ENCODE measurements at regions of chrX and their contacts with region 1.

Region 1: GRCh38 chrX:114075073-114075673 is 508.7 kb upstream of the HTR2C start:
- DNase-seq: no peak
- H3K4me3 Mint-ChIP-seq: no peak overlapping the region
- H3K27ac Mint-ChIP-seq: no peak overlapping the region
- H3K4me1 Mint-ChIP-seq: no peaks in the 10 kb centered on the region
- H3K27me3 Mint-ChIP-seq: peaks cover 64% of the 10 kb centered on the region
- CTCF ChIP-seq: peak; percentile 29

Region 2: DNA sequence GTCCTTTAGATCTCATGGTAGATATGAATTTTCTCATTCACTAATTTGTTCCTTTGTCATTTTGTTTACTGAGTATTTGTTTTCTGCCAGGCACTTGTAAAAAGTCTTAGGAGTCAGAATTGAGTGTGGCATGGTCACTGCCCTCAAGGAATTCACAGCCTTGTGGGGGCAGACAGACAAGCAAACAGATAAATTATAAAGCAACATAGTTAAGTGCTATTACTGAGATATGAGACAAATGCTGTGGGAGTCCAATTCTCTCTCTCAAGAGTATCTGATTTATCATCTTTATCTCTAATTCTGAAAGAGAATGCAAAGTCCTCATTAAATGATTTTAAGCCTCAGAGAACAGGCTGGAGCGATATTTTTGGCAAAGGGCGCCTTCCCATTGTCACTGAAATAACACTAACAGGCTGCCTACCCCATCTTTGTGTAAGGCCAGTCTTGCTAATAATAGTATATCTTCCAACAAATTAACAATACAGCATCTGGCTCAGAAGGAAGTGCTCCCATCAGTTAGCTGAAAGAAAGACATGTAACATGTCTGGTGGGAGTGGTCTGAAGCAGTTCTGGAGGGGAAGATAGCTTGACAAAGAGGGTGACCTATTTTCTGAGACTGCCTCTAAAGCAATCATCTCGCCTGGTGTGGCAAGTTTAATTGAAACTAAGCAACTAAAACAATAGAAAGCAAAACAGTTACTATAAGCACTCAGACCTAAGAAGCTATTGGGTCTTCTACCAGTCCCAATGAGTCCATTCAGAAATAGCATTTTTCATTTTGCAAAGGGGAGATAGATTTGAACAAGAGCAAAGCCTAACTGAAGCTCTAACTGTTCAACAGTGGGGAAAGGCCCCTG is 1173.1 kb before region 1 on chrX:
- CTCF ChIA-PET with region 1: no interaction called
- POLR2A ChIA-PET with region 1: no interaction called
- intact Hi-C with region 1: no loop called
- DNase-seq: no peak
- H3K4me3 Mint-ChIP-seq: no peak overlapping the region
- H3K27ac Mint-ChIP-seq: no peak overlapping the region
- H3K4me1 Mint-ChIP-seq: no peaks in the 10 kb centered on the region
- H3K27me3 Mint-ChIP-seq: peaks cover 10% of the 10 kb centered on the region
- CTCF ChIP-seq: no peak

Region 3: GRCh38 chrX:113947548-113947947 is 127.6 kb before region 1 on chrX:
- CTCF ChIA-PET with region 1: interaction called, 4 read pairs
- POLR2A ChIA-PET with region 1: no interaction called
- intact Hi-C with region 1: loop called (anchors 5 kb)
- DNase-seq: peak; percentile 25
- H3K4me3 Mint-ChIP-seq: no peak overlapping the region
- H3K27ac Mint-ChIP-seq: no peak overlapping the region
- H3K4me1 Mint-ChIP-seq: no peaks in the 10 kb centered on the region
- H3K27me3 Mint-ChIP-seq: peaks cover 28% of the 10 kb centered on the region
- CTCF ChIP-seq: peak; percentile 20

Region 4: GRCh38 chrX:114087543-114087942 is 12.4 kb after region 1 on chrX:
- CTCF ChIA-PET with region 1: no interaction called
- POLR2A ChIA-PET with region 1: no interaction called
- intact Hi-C with region 1: no loop called
- DNase-seq: no peak
- H3K4me3 Mint-ChIP-seq: no peak overlapping the region
- H3K27ac Mint-ChIP-seq: no peak overlapping the region
- H3K4me1 Mint-ChIP-seq: peaks cover 7% of the 10 kb centered on the region
- H3K27me3 Mint-ChIP-seq: peaks cover 40% of the 10 kb centered on the region
- CTCF ChIP-seq: no peak

Region 5: GRCh38 chrX:114361076-114361725 is 286.0 kb after region 1 on chrX:
- CTCF ChIA-PET with region 1: no interaction called
- POLR2A ChIA-PET with region 1: no interaction called
- intact Hi-C with region 1: no loop called
- DNase-seq: no peak
- H3K4me3 Mint-ChIP-seq: no peak overlapping the region
- H3K27ac Mint-ChIP-seq: no peak overlapping the region
- H3K4me1 Mint-ChIP-seq: no peaks in the 10 kb centered on the region
- H3K27me3 Mint-ChIP-seq: peaks cover 41% of the 10 kb centered on the region
- CTCF ChIP-seq: no peak

Region 6: DNA sequence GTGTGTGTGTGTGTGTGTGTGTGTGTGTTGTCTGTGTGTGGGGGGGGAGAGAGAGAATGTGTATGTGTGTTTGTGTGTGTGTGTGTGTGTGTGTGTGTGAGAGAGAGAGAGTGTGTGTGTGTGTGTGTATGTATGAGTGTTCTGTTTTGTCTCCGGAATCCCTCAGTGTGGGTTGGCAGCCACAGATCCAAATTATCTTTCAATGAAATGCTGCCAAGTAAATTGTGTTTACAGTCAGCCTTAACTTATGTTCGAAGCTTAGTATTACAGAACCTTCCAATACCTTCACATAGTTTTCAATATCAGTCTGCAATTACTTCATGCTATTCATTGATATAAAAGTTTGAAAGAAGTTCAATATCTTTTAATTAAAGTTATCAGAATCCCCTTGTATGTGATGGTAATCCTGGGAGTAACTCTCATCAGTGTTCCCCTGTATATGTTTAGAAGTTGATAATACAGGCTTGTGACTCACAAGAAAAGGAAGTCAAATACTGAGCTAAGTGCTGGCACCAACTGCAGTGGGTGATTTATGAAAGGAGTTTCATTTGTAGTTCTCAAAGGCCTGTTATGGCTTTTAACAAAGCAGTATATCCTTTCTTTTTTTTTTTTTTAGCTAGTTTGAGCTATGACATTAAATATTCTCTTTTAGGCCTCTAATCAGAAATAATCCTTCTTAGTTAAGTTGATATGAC is 457.1 kb after region 1 on chrX:
- CTCF ChIA-PET with region 1: no interaction called
- POLR2A ChIA-PET with region 1: no interaction called
- intact Hi-C with region 1: no loop called
- DNase-seq: peak; percentile 1
- H3K4me3 Mint-ChIP-seq: no peak overlapping the region
- H3K27ac Mint-ChIP-seq: peak overlapping the region; percentile 40
- H3K4me1 Mint-ChIP-seq: no peaks in the 10 kb centered on the region
- H3K27me3 Mint-ChIP-seq: peaks cover 31% of the 10 kb centered on the region
- CTCF ChIP-seq: no peak